GM12878 (cell line): ENCODE measurements at regions of chr5 and their contacts with region 1.

Region 1: DNA sequence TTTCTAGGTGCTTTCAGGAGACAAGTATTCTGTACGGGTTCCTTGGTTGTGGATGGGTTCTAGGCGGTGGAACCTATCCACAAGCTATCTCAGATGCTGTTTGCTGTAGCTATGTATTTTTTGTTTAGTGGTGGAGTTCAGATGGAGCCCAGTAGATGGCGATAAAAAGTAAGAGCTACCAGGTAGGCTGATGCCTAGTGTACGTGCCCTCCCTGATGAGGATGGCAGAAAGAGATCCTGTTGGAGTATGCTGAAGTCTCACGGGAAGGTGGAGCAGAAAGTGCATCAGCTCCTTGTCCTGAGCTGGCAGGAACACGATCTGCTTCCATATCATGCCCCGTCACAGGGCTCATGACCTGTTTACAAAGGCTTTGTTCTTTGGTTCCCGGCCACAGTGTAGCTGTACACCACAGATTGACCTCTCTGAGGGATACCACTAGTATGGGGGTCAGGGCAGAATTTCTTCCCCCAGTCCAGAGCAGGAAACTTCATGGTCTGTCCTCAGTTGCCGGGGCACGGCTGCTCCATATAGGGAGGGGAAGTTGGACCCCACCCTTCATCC is 12.6 kb upstream of the UGT3A2 start:
- DNase-seq: peak; percentile 11
- ATAC-seq: peak; percentile 99
- H3K4me3 ChIP-seq: no peak overlapping the region
- H3K27ac ChIP-seq: no peak overlapping the region
- H3K4me1 ChIP-seq: no peaks in the 10 kb centered on the region
- H3K27me3 ChIP-seq: no peaks in the 10 kb centered on the region
- CTCF ChIP-seq: peak; percentile 63 to 80 (median 70)
- EP300 ChIP-seq: no peak
- POLR2A ChIP-seq: no peak
- RAD21 ChIP-seq: peak; percentile 64

Region 2: GRCh38 chr5:36105819-36106218 is 26.5 kb after region 1 on chr5:
- CTCF ChIA-PET with region 1: interaction called, 10 read pairs
- POLR2A ChIA-PET with region 1: no interaction called
- RAD21 ChIA-PET with region 1: no interaction called
- SMC1A ChIA-PET with region 1: no interaction called
- in situ Hi-C with region 1: no loop called
- intact Hi-C with region 1: no loop called
- DNase-seq: no peak
- ATAC-seq: no peak
- H3K4me3 ChIP-seq: no peak overlapping the region
- H3K27ac ChIP-seq: no peak overlapping the region
- H3K4me1 ChIP-seq: no peaks in the 10 kb centered on the region
- H3K27me3 ChIP-seq: no peaks in the 10 kb centered on the region
- CTCF ChIP-seq: no peak
- EP300 ChIP-seq: no peak
- POLR2A ChIP-seq: no peak
- RAD21 ChIP-seq: no peak

Region 3: DNA sequence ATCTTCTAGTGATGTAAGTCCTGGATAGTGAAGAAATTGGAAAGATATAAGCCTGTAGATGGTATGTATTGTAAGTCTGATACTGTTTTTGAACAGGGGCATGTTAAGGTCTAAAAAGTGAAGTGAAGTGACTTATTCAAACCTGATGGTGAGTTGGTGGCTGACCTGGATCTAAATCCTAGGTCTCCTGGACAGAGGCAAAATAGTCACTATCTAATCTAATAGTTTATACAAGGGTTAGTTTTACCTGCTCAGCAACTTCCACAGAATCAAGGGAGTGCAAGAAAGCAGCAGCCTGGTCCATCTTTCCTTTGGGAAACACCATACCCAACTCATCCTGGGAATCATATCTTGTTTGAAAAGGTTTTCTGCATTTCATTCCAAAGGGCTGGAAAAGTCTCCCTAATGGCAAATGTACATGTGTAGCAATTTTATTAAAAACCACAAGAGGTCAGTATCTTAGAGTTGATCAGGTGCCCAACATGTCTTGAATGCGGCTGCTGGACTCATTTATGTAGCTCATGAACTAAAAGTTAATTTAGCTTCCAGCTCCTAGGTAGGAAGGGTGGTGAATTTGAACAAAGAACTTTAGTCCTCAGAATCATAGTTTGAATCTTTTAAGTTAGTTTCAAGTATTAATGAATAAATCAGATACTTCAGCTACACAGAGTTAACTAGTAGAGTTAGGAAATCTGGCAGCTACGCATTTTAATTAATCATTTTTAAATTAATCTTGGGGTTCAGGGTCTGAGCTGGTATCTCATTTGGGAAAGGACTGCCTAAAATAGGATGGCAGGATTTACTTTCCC is 98.6 kb after region 1 on chr5:
- CTCF ChIA-PET with region 1: interaction called, 13 read pairs
- POLR2A ChIA-PET with region 1: no interaction called
- RAD21 ChIA-PET with region 1: interaction called, 10 read pairs
- SMC1A ChIA-PET with region 1: interaction called, 13 read pairs
- in situ Hi-C with region 1: no loop called
- intact Hi-C with region 1: loop called (anchors 2 kb)
- DNase-seq: no peak
- ATAC-seq: peak; percentile 79
- H3K4me3 ChIP-seq: peak overlapping the region; percentile 1; the same call in 1 of the 2 replicates
- H3K27ac ChIP-seq: peak overlapping the region; percentile 50; the same call in 1 of the 2 replicates
- H3K4me1 ChIP-seq: peaks cover 14% of the 10 kb centered on the region
- H3K27me3 ChIP-seq: no peaks in the 10 kb centered on the region
- CTCF ChIP-seq: peak; percentile 13 to 37 (median 37); a peak in 4 of 6 replicates
- EP300 ChIP-seq: no peak
- POLR2A ChIP-seq: no peak
- RAD21 ChIP-seq: peak; percentile 54

Region 4: DNA sequence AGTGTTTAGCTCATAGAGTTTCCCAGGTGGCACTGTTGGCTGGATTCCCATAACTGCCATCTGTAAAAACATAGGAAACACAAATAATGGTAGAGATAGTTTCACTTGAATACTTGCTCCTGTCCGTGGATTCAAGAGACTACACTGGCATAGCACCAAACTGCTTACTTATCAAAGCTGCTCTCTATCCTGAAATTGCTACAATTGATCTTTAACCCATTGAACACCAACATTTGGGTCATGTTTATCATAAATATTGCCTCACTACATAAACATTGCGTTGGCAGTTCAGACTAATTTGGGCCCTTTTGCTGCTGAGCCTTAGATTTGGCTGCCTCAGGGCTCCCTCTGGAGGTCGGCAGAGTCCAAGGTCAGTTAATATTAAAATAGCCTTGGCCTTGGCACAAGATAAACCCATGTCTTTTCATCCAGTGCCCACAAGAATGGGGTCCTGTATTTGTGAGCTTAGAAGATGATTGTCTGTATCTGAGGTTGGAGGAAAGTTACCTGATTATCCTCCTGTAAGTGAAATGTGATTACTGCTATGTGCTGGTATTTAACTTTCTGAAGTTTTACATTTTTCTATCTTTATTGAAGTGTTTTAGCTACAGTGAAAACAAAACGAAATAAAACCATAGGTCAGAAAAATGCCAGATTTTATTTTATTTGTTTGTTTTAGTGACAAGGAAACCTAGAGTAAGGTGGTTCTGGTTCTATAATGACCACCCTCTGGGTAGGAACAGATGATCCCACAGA is 226.5 kb after region 1 on chr5:
- CTCF ChIA-PET with region 1: interaction called, 83 read pairs
- POLR2A ChIA-PET with region 1: no interaction called
- RAD21 ChIA-PET with region 1: interaction called, 18 read pairs
- SMC1A ChIA-PET with region 1: interaction called, 24 read pairs
- in situ Hi-C with region 1: loop called (anchors 10 kb)
- intact Hi-C with region 1: loop called (anchors 1 kb)
- DNase-seq: no peak
- ATAC-seq: peak; percentile 89
- H3K4me3 ChIP-seq: no peak overlapping the region
- H3K27ac ChIP-seq: no peak overlapping the region
- H3K4me1 ChIP-seq: no peaks in the 10 kb centered on the region
- H3K27me3 ChIP-seq: peaks cover 0 to 3% of the 10 kb centered on the region in 2 experiments; a peak in 1 of 4 replicates
- CTCF ChIP-seq: peak; percentile 61 to 83 (median 74)
- EP300 ChIP-seq: no peak
- POLR2A ChIP-seq: no peak
- RAD21 ChIP-seq: peak; percentile 82